ENCODE measurements at regions of chr17 and their contacts with region 1.

Region 1: GRCh38 chr17:20315821-20316220 is 151.5 kb downstream of the LGALS9B start:
- DNase-seq: no peak
- H3K4me3 ChIP-seq: no peak overlapping the region
- H3K27ac ChIP-seq: no peak overlapping the region
- H3K4me1 ChIP-seq: peaks cover 6 to 8% (median 7%) of the 10 kb centered on the region in 4 donors
- H3K27me3 ChIP-seq: no peaks in the 10 kb centered on the region
- CTCF ChIP-seq: no peak
- EP300 ChIP-seq: no peak
- POLR2A ChIP-seq: no peak

Region 2: DNA sequence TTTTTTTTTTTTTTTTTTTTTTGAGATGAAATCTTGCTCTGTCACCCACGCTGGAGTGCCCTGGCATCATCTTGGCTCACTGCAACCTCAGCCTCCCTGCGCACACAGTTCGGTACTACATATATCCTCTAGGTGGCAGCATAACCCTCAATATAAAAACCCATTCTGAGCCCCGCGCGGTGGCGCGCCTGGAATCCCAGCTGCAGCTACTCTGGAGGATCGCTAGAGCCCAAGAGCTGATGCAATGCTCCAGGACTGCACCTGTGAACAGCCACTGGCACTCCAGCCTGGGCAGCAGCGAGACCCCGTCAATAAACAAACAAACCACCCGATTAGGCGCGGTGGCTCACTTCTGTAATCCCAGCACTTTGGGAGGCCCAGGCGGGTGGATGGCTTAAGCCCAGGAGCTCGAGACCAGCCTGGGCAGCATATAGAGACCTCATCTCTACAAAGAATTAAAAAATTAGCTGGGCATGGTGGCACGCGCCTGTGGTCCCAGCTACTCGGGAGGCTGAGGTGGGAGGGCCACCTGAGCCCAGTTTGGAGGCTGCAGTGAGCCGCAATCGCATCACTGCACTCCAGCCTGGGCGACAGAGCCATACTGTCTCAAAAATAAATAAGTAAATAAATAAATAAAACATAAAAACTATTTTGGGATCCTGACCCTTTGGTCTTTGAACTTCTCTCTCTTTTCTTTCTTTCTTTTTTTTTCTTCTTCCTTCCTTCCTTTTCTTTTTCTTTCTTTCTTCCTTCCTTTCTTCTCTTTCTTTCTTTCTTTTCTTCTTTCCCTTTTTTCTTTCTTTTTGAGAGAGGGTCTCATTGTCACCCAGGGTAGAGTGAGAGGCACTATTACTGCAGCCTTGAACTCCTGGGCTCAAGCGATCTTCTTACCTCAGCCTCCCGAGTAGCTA is 322.8 kb before region 1 on chr17:
- intact Hi-C with region 1: loop called (anchors 10 kb)
- DNase-seq: peak; percentile 96
- H3K4me3 ChIP-seq: peak overlapping the region in 3 of 4 donors; percentile 10 to 23 (median 15)
- H3K27ac ChIP-seq: no peak overlapping the region
- H3K4me1 ChIP-seq: peaks cover 4 to 6% (median 5%) of the 10 kb centered on the region in 4 donors
- H3K27me3 ChIP-seq: peaks cover 0 to 11% (median 0%) of the 10 kb centered on the region in 4 donors
- CTCF ChIP-seq: peak; percentile 76 to 87 (median 78)
- EP300 ChIP-seq: no peak
- POLR2A ChIP-seq: no peak

Region 3: DNA sequence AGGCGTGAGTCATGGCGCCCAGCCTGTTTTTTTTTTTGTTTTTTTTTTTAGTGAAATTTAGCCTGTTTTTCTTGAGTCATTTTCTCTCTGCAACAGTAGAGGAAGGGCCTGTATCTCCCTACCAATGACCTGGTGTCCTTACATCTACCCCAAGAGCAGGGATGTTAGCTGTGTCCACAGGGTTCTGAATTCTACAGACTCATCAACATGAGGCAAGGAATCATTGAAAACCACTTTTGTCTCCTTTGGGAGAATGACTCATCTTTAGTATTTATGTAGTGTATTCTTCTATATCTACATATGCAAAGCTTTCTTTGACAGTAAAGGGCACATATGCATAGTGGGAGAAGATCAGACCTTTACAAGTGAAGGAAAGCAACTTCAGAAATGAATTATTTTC is 201.4 kb before region 1 on chr17:
- intact Hi-C with region 1: no loop called
- DNase-seq: no peak
- H3K4me3 ChIP-seq: no peak overlapping the region
- H3K27ac ChIP-seq: no peak overlapping the region
- H3K4me1 ChIP-seq: no peaks in the 10 kb centered on the region
- H3K27me3 ChIP-seq: no peaks in the 10 kb centered on the region
- CTCF ChIP-seq: no peak
- EP300 ChIP-seq: no peak
- POLR2A ChIP-seq: no peak

Region 4: DNA sequence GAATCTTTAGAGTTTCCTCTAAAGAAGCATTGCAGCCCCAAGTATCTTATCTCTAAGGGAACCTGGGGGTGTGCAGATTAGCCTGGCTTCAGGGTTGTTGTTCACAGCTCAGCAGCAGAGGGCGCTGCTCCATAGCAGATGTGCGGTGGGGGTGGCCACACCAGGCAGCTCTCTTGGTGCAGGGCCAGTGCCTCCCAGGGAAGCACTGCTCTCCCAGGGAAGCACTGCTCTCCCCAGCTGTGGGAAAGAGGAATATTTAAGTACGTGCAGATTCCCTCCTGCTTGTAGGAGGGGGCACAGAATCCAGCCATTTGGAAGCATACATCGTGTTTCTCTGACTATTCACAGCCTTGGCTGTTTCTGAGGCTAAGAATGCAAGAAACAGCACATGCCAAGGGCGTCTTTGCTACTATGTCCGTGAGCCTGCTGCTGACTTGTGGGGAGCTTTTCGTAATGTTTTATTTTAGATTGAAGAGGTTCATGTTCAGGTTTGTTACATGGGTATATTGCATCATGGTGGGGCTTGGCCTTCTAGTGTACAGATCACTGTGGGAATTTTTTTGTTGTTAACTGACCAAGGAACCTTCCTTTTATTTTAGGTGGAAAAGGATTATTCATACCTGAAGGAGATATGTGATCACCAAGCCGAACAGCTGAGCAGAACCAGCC is 88.9 kb before region 1 on chr17:
- intact Hi-C with region 1: loop called (anchors 5 kb)
- DNase-seq: no peak
- H3K4me3 ChIP-seq: no peak overlapping the region
- H3K27ac ChIP-seq: no peak overlapping the region
- H3K4me1 ChIP-seq: peaks cover 0 to 7% (median 5%) of the 10 kb centered on the region in 4 donors
- H3K27me3 ChIP-seq: no peaks in the 10 kb centered on the region
- CTCF ChIP-seq: peak; percentile 65 to 85 (median 67)
- EP300 ChIP-seq: no peak
- POLR2A ChIP-seq: no peak